ENCODE measurements at regions of chr5 and their contacts with region 1.

Region 1: DNA sequence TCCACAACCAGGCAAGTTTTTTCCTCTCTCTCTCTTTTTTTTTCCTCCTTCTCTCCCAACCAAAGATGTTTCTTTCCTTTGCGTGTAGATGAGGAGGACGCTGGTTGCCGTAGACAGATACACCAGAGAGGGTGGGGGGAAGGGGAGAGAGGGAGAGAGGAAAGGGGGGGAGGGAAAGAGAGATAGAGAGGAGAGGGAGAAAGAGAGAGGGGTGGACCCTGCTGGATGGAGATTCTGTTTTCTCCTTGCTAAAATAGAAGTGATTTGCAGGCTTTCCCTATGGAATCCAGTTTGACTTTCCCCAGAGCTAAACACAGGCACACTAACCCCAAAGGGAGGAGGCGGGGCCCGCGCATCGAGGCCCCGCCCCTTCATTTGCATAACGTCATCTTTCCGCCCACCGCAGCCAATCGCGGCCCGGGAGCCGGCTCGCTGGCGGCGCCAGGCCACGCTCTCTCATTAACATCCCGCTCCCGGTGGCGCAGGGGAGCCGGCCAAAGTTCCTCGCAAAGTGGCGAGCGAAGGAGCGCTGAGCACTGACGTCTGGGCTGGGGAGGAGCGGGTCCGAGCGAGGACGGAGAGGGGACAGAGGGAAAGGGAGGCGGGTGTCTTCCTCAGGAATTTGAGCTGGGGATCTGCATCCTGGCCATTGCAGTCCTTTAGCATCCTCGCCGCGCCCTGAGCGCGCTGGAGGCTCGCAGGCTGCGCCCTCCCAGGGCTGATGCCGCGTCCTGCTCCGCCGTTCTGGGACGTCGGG is 487 bp upstream of the EBF1 start:
- DNase-seq: peak; percentile 81
- ATAC-seq: peak; percentile 58
- H3K4me3 ChIP-seq: peak overlapping the region; percentile 67
- H3K27ac ChIP-seq: peak overlapping the region; percentile 67
- H3K4me1 ChIP-seq: peaks cover 5% of the 10 kb centered on the region
- H3K27me3 ChIP-seq: no peaks in the 10 kb centered on the region
- CTCF ChIP-seq: no peak
- EP300 ChIP-seq: peak in 1 of 2 experiments; percentile 1; a peak in 2 of 4 replicates
- POLR2A ChIP-seq: peak; percentile 93
- RAD21 ChIP-seq: no peak

Region 2: GRCh38 chr5:158354958-158355357 is 745.2 kb before region 1 on chr5:
- CTCF ChIA-PET with region 1: no interaction called
- POLR2A ChIA-PET with region 1: no interaction called
- RAD21 ChIA-PET with region 1: no interaction called
- SMC1A ChIA-PET with region 1: no interaction called
- in situ Hi-C with region 1: no loop called
- intact Hi-C with region 1: no loop called
- DNase-seq: peak; percentile 1
- ATAC-seq: peak; percentile 70
- H3K4me3 ChIP-seq: no peak overlapping the region
- H3K27ac ChIP-seq: no peak overlapping the region
- H3K4me1 ChIP-seq: no peaks in the 10 kb centered on the region
- H3K27me3 ChIP-seq: no peaks in the 10 kb centered on the region
- CTCF ChIP-seq: no peak
- EP300 ChIP-seq: peak in 1 of 2 experiments; percentile 45; a peak in 1 of 4 replicates
- POLR2A ChIP-seq: no peak
- RAD21 ChIP-seq: no peak

Region 3: GRCh38 chr5:158701406-158702177 is 398.6 kb before region 1 on chr5:
- CTCF ChIA-PET with region 1: interaction called, 60 read pairs
- POLR2A ChIA-PET with region 1: no interaction called
- RAD21 ChIA-PET with region 1: interaction called, 210 read pairs
- SMC1A ChIA-PET with region 1: interaction called, 224 read pairs
- in situ Hi-C with region 1: loop called (anchors 5 kb)
- intact Hi-C with region 1: no loop called
- DNase-seq: no peak
- ATAC-seq: no peak
- H3K4me3 ChIP-seq: no peak overlapping the region
- H3K27ac ChIP-seq: no peak overlapping the region
- H3K4me1 ChIP-seq: no peaks in the 10 kb centered on the region
- H3K27me3 ChIP-seq: no peaks in the 10 kb centered on the region
- CTCF ChIP-seq: no peak
- EP300 ChIP-seq: no peak
- POLR2A ChIP-seq: no peak
- RAD21 ChIP-seq: no peak

Region 4: GRCh38 chr5:158780656-158781237 is 319.5 kb before region 1 on chr5:
- CTCF ChIA-PET with region 1: interaction called, 4 read pairs
- POLR2A ChIA-PET with region 1: interaction called, 3 read pairs
- RAD21 ChIA-PET with region 1: interaction called, 6 read pairs
- SMC1A ChIA-PET with region 1: interaction called, 6 read pairs
- in situ Hi-C with region 1: no loop called
- intact Hi-C with region 1: loop called (anchors 5 kb)
- DNase-seq: peak; percentile 28
- ATAC-seq: peak; percentile 85
- H3K4me3 ChIP-seq: no peak overlapping the region
- H3K27ac ChIP-seq: peak overlapping the region; percentile 46
- H3K4me1 ChIP-seq: peaks cover 18% of the 10 kb centered on the region
- H3K27me3 ChIP-seq: no peaks in the 10 kb centered on the region
- CTCF ChIP-seq: no peak
- EP300 ChIP-seq: no peak
- POLR2A ChIP-seq: no peak
- RAD21 ChIP-seq: no peak

Region 5: DNA sequence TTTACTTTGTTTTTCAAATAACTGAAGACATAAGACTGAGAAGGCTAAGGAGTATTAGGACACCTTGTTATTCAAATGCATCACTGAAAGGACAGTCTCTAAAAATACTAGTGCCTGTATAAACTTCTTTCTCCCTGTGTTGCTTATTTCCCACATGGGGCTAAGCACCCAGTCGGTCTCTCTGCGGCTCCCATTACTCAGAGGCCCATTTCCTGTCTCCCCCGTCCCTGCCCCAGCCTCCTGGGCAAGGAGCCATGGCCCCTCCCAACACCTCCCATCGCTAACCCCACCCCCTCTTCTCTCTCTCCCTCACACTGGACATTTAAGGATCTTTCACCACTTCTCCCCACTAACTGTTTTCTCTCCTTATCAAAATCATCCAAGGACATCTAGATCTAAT is 82.4 kb before region 1 on chr5:
- CTCF ChIA-PET with region 1: no interaction called
- POLR2A ChIA-PET with region 1: interaction called, 4 read pairs
- RAD21 ChIA-PET with region 1: no interaction called
- SMC1A ChIA-PET with region 1: interaction called, 10 read pairs
- in situ Hi-C with region 1: no loop called
- intact Hi-C with region 1: no loop called
- DNase-seq: no peak
- ATAC-seq: peak; percentile 93
- H3K4me3 ChIP-seq: no peak overlapping the region
- H3K27ac ChIP-seq: peak overlapping the region; percentile 22
- H3K4me1 ChIP-seq: peaks cover 5% of the 10 kb centered on the region
- H3K27me3 ChIP-seq: no peaks in the 10 kb centered on the region
- CTCF ChIP-seq: no peak
- EP300 ChIP-seq: no peak
- POLR2A ChIP-seq: no peak
- RAD21 ChIP-seq: no peak